ENCODE measurements at regions of chr2 and their contacts with region 1.

Region 1: GRCh38 chr2:197198890-197199289 is 111.7 kb downstream of the ANKRD44 start:
- DNase-seq: peak; percentile 76 to 98 (median 87)
- ATAC-seq: peak; percentile 80
- H3K4me3 ChIP-seq: peak overlapping the region in 1 of 2 experiments; percentile 41
- H3K4me3 Mint-ChIP-seq: peak overlapping the region; percentile 94
- H3K27ac ChIP-seq: peak overlapping the region; percentile 66 to 86
- H3K27ac Mint-ChIP-seq: peak overlapping the region; percentile 99
- H3K4me1 ChIP-seq: peaks cover 81% of the 10 kb centered on the region
- H3K4me1 Mint-ChIP-seq: peaks cover 90% of the 10 kb centered on the region
- H3K27me3 ChIP-seq: no peaks in the 10 kb centered on the region
- H3K27me3 Mint-ChIP-seq: no peaks in the 10 kb centered on the region
- CTCF ChIP-seq: no peak

Region 2: DNA sequence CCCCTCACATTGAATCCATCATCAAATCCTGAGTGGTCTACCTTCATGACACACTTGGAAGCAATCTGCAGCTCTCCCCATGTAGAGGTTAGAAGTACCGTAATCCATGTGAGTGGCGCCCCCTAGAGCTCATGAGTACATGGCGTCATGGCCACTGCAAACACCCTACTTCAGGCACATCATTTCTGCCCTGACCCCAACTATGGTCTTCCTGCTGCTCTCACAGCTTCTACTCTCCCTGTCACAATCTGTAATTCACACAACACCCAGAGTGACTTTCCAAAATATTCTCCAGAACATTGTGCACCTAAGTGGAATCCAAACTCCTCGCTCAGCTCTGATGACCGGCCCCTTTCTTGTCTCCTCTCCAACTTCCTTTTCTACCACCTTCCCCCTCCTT is 30.2 kb before region 1 on chr2:
- CTCF ChIA-PET with region 1: no interaction called
- POLR2A ChIA-PET with region 1: no interaction called
- intact Hi-C with region 1: no loop called
- DNase-seq: peak; percentile 30 to 80 (median 75)
- ATAC-seq: peak; percentile 91
- H3K4me3 ChIP-seq: no peak overlapping the region
- H3K4me3 Mint-ChIP-seq: no peak overlapping the region
- H3K27ac ChIP-seq: peak overlapping the region in 1 of 2 experiments; percentile 32
- H3K27ac Mint-ChIP-seq: peak overlapping the region; percentile 85
- H3K4me1 ChIP-seq: peaks cover 66% of the 10 kb centered on the region
- H3K4me1 Mint-ChIP-seq: peaks cover 78% of the 10 kb centered on the region
- H3K27me3 ChIP-seq: no peaks in the 10 kb centered on the region
- H3K27me3 Mint-ChIP-seq: no peaks in the 10 kb centered on the region
- CTCF ChIP-seq: peak; percentile 65

Region 3: DNA sequence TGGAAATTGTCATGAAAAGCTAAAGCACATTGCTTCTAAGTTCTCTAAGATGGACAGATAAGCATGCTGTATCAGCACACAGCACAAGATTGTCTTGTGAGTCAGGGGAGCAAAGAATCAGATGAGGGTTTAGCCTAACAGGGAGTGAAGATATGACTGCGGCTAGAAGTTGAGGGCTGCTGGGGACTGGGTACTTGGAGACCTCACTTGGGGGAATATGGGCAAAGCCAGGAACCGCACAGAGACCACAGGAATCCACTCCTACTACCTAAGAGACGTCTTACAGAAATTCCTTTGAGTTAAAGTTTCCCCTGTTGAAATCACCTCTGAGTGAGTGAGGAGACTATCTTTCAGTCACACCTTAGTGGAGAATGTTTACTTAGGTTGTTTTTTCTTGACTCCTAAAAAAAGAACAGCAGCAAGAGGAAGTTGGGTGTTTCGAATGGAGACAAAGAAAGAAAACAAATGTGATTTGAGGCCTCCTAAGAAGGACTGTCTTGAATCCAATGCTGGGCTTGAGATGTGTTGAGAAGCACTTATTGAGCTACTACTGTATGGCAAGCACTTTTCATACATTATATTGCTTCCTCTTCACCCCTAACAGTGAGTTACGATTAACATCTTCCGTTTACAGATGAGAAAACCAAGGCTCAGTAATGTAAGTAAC is 11.0 kb after region 1 on chr2:
- CTCF ChIA-PET with region 1: interaction called, 12 read pairs
- POLR2A ChIA-PET with region 1: interaction called, 121 read pairs
- intact Hi-C with region 1: loop called in 1 of 2 experiments (anchors 1 kb)
- DNase-seq: peak in 7 of 9 experiments; percentile 22 to 73 (median 48)
- ATAC-seq: peak; percentile 10
- H3K4me3 ChIP-seq: peak overlapping the region in 1 of 2 experiments; percentile 11
- H3K4me3 Mint-ChIP-seq: peak overlapping the region; percentile 54
- H3K27ac ChIP-seq: peak overlapping the region; percentile 24 to 73
- H3K27ac Mint-ChIP-seq: peak overlapping the region; percentile 100
- H3K4me1 ChIP-seq: peaks cover 99% of the 10 kb centered on the region
- H3K4me1 Mint-ChIP-seq: peaks cover 97% of the 10 kb centered on the region
- H3K27me3 ChIP-seq: no peaks in the 10 kb centered on the region
- H3K27me3 Mint-ChIP-seq: no peaks in the 10 kb centered on the region
- CTCF ChIP-seq: no peak

Region 4: DNA sequence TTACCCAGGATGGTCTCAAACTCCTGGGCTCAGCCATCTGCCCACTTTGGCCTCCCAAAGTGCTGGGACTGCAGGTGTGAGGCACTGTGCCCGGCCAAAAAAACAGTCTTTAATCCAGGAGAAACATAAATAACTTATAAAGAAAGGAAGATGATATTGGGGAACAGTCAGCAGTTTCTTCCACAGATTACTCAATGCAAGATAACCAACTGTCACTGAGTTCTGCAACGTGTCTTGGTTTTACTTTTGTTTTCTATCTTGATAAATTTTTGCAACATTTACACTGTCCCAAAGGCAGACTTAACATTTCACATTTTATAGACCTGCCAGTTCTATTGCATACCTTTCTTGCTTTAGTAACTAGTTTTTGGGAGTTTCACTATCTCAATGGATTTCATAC is 40.5 kb after region 1 on chr2:
- CTCF ChIA-PET with region 1: interaction called, 5 read pairs
- POLR2A ChIA-PET with region 1: interaction called, 15 read pairs
- intact Hi-C with region 1: loop called (anchors 2 to 5 kb)
- DNase-seq: peak in 2 of 9 experiments; percentile 36 to 62
- ATAC-seq: peak; percentile 41
- H3K4me3 ChIP-seq: peak overlapping the region; percentile 38 to 41
- H3K4me3 Mint-ChIP-seq: peak overlapping the region; percentile 84
- H3K27ac ChIP-seq: peak overlapping the region; percentile 39 to 89
- H3K27ac Mint-ChIP-seq: peak overlapping the region; percentile 96
- H3K4me1 ChIP-seq: peaks cover 88% of the 10 kb centered on the region
- H3K4me1 Mint-ChIP-seq: peaks cover 87% of the 10 kb centered on the region
- H3K27me3 ChIP-seq: no peaks in the 10 kb centered on the region
- H3K27me3 Mint-ChIP-seq: no peaks in the 10 kb centered on the region
- CTCF ChIP-seq: no peak

Region 5: GRCh38 chr2:197255543-197255942 is 56.7 kb after region 1 on chr2:
- CTCF ChIA-PET with region 1: interaction called, 5 read pairs
- POLR2A ChIA-PET with region 1: interaction called, 23 read pairs
- intact Hi-C with region 1: loop called (anchors 5 kb)
- DNase-seq: peak; percentile 45 to 92 (median 72)
- ATAC-seq: peak; percentile 79
- H3K4me3 ChIP-seq: peak overlapping the region; percentile 9 to 38
- H3K4me3 Mint-ChIP-seq: peak overlapping the region; percentile 74
- H3K27ac ChIP-seq: peak overlapping the region; percentile 46 to 70
- H3K27ac Mint-ChIP-seq: peak overlapping the region; percentile 95
- H3K4me1 ChIP-seq: peaks cover 83% of the 10 kb centered on the region
- H3K4me1 Mint-ChIP-seq: peaks cover 82% of the 10 kb centered on the region
- H3K27me3 ChIP-seq: no peaks in the 10 kb centered on the region
- H3K27me3 Mint-ChIP-seq: no peaks in the 10 kb centered on the region
- CTCF ChIP-seq: no peak

Region 6: GRCh38 chr2:197304556-197305011 is 105.7 kb after region 1 on chr2:
- CTCF ChIA-PET with region 1: interaction called, 89 read pairs
- POLR2A ChIA-PET with region 1: interaction called, 288 read pairs
- intact Hi-C with region 1: no loop called
- DNase-seq: peak in 2 of 9 experiments; percentile 33 to 50
- ATAC-seq: peak; percentile 18
- H3K4me3 ChIP-seq: peak overlapping the region; percentile 15 to 24
- H3K4me3 Mint-ChIP-seq: peak overlapping the region; percentile 92
- H3K27ac ChIP-seq: peak overlapping the region; percentile 20 to 88
- H3K27ac Mint-ChIP-seq: peak overlapping the region; percentile 94
- H3K4me1 ChIP-seq: peaks cover 86% of the 10 kb centered on the region
- H3K4me1 Mint-ChIP-seq: peaks cover 89% of the 10 kb centered on the region
- H3K27me3 ChIP-seq: no peaks in the 10 kb centered on the region
- H3K27me3 Mint-ChIP-seq: no peaks in the 10 kb centered on the region
- CTCF ChIP-seq: no peak